Ascending aorta (tissue), 2 donors: ENCODE measurements at regions of chr13 and their contacts with region 1.

Region 1: DNA sequence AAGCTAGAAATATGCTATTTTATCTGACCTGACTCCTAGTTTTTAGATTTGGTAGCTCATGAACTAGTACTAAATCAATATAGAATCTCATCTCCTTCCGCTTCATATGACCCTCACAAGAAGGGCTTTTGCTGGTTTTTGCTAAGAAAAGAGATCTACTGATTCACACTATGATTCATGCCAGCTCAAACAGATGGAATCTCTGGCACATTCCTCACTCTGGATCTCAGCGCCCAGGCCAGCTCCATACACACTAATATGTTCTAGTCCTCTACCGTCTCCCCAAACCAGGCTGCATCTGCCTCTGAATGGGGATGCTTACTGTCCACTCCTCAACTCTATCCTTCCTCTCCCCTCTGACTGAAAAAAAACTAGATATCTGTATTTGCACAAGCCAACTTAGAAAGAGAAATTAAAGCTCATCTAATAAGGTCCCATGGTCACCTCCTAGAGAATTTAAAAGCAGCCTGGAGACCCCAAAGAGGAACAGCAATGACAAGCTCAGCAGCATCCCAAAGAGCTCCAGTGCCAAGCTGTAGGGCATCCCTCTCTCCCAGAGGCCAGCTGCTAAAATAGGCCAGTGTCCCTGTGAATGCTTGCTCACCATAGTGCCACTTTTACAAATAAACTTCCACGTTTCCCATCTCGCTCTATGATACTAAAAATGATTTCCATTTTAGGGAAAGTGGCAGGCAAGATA is 74.9 kb downstream of the LHFPL6 start:
- DNase-seq: peak in 1 of 2 donors; percentile 82
- H3K4me3 ChIP-seq: peak overlapping the region in 1 of 2 donors; percentile 41
- H3K27ac ChIP-seq: peak overlapping the region; percentile 59 to 70
- H3K4me1 ChIP-seq: peaks cover 6 to 36% of the 10 kb centered on the region in 2 donors
- H3K27me3 ChIP-seq: no peaks in the 10 kb centered on the region
- CTCF ChIP-seq: no peak

Region 2: DNA sequence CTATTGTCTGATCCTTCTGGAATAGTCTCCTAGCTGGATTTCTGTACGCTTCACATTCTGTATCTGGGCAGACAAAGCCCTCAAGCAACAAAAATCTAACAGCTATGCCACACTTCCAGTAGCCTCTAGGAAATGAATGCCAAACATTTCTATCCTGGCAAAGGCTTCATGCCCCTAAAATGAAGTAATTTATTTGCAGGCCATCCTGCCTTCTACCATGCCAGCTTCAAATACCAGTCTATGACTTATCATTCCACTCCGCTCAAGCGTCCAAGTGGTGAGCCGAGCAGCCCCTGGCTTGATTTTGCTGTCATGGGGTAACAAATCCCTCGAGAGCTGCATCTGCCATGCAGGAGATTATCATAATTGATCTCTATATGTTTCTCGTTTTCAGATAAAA is 12.0 kb before region 1 on chr13:
- intact Hi-C with region 1: loop called (anchors 1 kb)
- DNase-seq: no peak
- H3K4me3 ChIP-seq: no peak overlapping the region
- H3K27ac ChIP-seq: no peak overlapping the region
- H3K4me1 ChIP-seq: peaks cover 0 to 11% of the 10 kb centered on the region in 2 donors
- H3K27me3 ChIP-seq: no peaks in the 10 kb centered on the region
- CTCF ChIP-seq: no peak

Region 3: GRCh38 chr13:39602614-39603366 is 74.7 kb after region 1 on chr13 and contains the start of gene LHFPL6:
- intact Hi-C with region 1: loop called (anchors 5 kb)
- DNase-seq: peak; percentile 35 to 90
- H3K4me3 ChIP-seq: peak within 1 kb of the TSS; percentile 82 to 92
- H3K27ac ChIP-seq: peak within 1 kb of the TSS; percentile 83 to 85
- H3K4me1 ChIP-seq: peaks cover 3 to 9% of the 10 kb centered on the region in 2 donors
- H3K27me3 ChIP-seq: no peaks in the 10 kb centered on the region
- CTCF ChIP-seq: peak in 2 of 3 experiments; percentile 25 to 29
- total RNA-seq, gene LHFPL6: 69.4 TPM